Aorta (tissue), 5 donors: ENCODE measurements at regions of chr12 and their contacts with region 1.

Region 1: GRCh38 chr12:66290716-66291200 is 11.5 kb upstream of the HELB start:
- DNase-seq: no peak
- ATAC-seq: no peak
- H3K4me3 ChIP-seq: no peak overlapping the region
- H3K27ac ChIP-seq: no peak overlapping the region
- H3K4me1 ChIP-seq: no peaks in the 10 kb centered on the region
- H3K27me3 ChIP-seq: no peaks in the 10 kb centered on the region

Region 2: DNA sequence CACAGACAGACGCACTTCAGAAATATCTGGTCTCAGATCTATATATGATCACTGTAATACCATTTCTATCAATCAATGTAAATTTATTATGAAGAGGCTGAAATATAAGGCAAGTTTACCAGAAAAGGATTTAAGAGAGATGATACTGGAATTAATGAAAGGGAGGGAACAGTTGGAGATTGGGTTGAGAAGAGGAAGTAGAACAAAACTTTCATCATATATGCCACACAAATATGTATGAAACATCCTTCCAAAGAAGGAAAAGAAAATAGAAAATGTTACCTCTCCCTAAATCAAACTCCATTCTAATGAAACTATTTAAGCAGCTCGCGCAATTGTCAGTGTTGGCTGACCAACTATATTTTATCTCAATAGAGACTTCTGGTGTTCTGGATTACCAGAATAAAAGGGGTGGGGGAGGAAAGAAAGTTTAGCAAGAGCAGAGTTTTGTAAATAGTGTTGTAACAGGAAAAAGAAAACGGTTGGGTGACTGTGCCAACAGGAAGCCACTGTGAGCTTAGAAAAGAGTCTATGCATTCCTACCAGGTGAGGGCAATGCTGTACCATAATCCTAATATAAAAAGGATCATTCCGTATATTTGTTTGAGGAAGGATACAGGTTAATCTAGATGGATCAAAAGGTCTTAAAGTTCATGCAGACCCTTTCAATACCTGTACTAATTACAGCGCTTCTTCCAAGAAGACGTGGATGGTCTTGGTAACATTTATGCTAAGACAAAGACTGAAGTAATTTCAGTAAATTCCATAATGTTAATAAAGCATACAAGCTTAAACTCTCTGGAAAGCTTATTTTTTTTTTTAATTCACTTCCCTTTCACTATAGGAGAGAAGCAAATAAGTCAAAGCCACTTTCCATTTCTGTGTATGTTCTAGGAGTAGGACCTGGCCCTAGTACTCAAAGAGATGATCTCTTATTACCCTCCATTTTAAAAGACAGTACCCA is 145.7 kb before region 1 on chr12:
- intact Hi-C with region 1: loop called in 1 of 2 experiments (anchors 10 kb)
- DNase-seq: no peak
- ATAC-seq: peak; percentile 83
- H3K4me3 ChIP-seq: no peak overlapping the region
- H3K27ac ChIP-seq: no peak overlapping the region
- H3K4me1 ChIP-seq: no peaks in the 10 kb centered on the region
- H3K27me3 ChIP-seq: no peaks in the 10 kb centered on the region

Region 3: GRCh38 chr12:66269757-66270383 is 20.9 kb before region 1 on chr12:
- intact Hi-C with region 1: no loop called
- DNase-seq: no peak
- ATAC-seq: no peak
- H3K4me3 ChIP-seq: no peak overlapping the region
- H3K27ac ChIP-seq: no peak overlapping the region
- H3K4me1 ChIP-seq: no peaks in the 10 kb centered on the region
- H3K27me3 ChIP-seq: no peaks in the 10 kb centered on the region